GM10248 (cell line): ENCODE measurements at regions of chr20 and their contacts with region 1.

Region 1: GRCh38 chr20:63864847-63865640 is at the start of gene TPD52L2:
- DNase-seq: peak; percentile 97
- CTCF ChIP-seq: no peak

Region 2: GRCh38 chr20:63622732-63623131 is 242.3 kb before region 1 on chr20:
- CTCF ChIA-PET with region 1: no interaction called
- POLR2A ChIA-PET with region 1: no interaction called
- DNase-seq: no peak
- CTCF ChIP-seq: no peak

Region 3: GRCh38 chr20:63850689-63851559 is 14.1 kb before region 1 on chr20:
- CTCF ChIA-PET with region 1: interaction called, 27 read pairs
- POLR2A ChIA-PET with region 1: interaction called, 3 read pairs
- DNase-seq: peak; percentile 93
- CTCF ChIP-seq: no peak

Region 4: GRCh38 chr20:63876489-63877036 is 11.5 kb after region 1 on chr20:
- CTCF ChIA-PET with region 1: interaction called, 10 read pairs
- POLR2A ChIA-PET with region 1: interaction called, 4 read pairs
- DNase-seq: no peak
- CTCF ChIP-seq: no peak